ENCODE measurements at regions of chr7 and their contacts with region 1.

Region 1: DNA sequence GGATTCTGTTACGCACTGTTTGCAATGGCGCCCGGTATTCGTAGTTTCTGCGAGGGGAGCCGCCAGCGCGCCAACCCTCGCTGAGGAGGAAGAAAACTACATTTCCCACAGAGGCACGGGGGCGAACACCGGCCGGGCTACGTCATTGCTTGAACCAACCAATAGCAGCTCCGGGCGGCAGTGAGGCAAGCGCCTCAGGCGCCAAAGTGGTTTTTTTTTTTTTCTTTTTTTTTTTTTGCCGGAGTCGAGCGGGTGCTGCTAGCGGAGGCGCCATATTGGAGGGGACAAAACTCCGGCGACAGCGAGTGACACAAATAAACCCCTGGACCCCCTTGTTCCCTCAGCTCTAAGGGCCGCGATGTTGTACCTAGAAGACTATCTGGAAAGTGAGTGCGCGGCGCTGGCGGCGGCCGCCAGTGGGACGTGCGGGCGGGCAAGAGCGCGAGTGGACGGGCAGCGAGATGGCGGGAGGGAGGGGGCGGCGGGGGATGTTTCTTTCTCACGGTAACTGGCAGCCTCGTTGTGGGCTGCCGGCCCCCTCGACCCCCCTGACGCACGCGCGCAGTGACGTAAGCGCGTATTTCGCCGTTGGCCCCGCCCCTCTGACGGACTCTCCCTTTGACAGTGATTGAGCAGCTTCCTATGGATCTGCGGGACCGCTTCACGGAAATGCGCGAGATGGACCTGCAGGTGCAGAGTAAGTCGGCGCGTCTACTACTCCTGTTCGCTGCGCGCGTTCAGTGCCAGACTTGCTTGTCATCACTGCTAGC is at the start of gene ING3:
- DNase-seq: peak; percentile 93 to 98
- H3K4me3 ChIP-seq: peak within 1 kb of the TSS; percentile 66 to 89 (median 77)
- H3K27ac ChIP-seq: peak within 1 kb of the TSS; percentile 99
- H3K4me1 ChIP-seq: no peaks in the 10 kb centered on the region
- H3K27me3 ChIP-seq: no peaks in the 10 kb centered on the region
- CTCF ChIP-seq: no peak
- EP300 ChIP-seq: no peak
- POLR2A ChIP-seq: peak; percentile 68 to 90
- RAD21 ChIP-seq: 0 out of 4 replicates have a peak, but pooled peaks of 1 of the 2 experiments have one; percentile 1
- total RNA-seq, gene ING3: 13.9 and 17.7 TPM in 2 replicates

Region 2: GRCh38 chr7:120961638-120962173 is 11.0 kb after region 1 on chr7:
- CTCF ChIA-PET with region 1: no interaction called
- POLR2A ChIA-PET with region 1: interaction called, 17 read pairs
- DNase-seq: no peak
- H3K4me3 ChIP-seq: no peak overlapping the region
- H3K27ac ChIP-seq: no peak overlapping the region
- H3K4me1 ChIP-seq: peaks cover 0 to 2% (median 0%) of the 10 kb centered on the region in 4 experiments; a peak in 2 of 7 replicates
- H3K27me3 ChIP-seq: no peaks in the 10 kb centered on the region
- CTCF ChIP-seq: no peak
- EP300 ChIP-seq: no peak
- POLR2A ChIP-seq: no peak
- RAD21 ChIP-seq: no peak

Region 3: DNA sequence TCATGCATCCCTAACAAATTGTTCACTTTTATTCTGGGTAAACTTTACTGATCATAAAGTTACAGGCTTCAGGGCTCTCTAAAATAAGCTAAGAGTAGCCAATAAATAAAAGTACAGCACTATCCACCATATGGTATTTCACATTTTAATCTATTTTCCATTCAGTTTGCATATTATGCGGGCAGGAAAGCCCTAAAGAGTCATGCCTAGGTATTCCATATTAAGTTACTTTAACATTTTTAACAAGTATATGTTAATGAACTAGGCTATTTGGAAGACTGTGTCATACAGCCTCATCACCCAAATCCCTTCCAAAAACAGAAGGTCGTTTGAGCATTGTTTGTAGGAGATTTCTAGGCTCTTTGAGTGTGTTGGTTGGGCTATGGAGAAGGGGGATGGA is 144.1 kb after region 1 on chr7:
- CTCF ChIA-PET with region 1: no interaction called
- POLR2A ChIA-PET with region 1: no interaction called
- DNase-seq: no peak
- H3K4me3 ChIP-seq: no peak overlapping the region
- H3K27ac ChIP-seq: no peak overlapping the region
- H3K4me1 ChIP-seq: 0 out of 7 replicates have a peak, but pooled peaks cover 0 to 3% (median 0%) of the 10 kb centered on the region in 4 experiments
- H3K27me3 ChIP-seq: no peaks in the 10 kb centered on the region
- CTCF ChIP-seq: no peak
- EP300 ChIP-seq: no peak
- POLR2A ChIP-seq: no peak
- RAD21 ChIP-seq: no peak

Measured in H1 (cell line).